PC-3 (cell line): ENCODE measurements at regions of chr11 and their contacts with region 1.

Region 1: DNA sequence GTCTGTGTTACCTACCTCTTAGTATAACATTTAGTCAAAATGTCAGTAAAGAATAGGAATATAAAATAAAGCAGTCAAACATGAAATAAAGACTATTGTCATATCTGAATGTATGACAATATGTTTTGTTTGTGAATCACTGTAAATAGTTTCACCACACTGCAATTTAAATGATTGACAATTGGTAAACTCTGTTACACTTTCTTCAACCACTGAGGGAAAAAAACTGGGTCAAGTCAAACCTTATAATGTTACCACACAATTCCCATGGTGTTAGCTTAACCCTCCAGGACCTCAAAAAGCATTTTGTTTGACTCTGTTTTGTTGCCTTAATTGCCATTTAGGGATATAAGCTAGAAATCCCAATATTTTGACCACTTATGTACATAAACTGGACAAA is 10.5 kb upstream of the MMP13 start:
- DNase-seq: peak; percentile 77
- ATAC-seq: peak; percentile 82
- H3K4me3 ChIP-seq: no peak overlapping the region
- H3K27ac ChIP-seq: no peak overlapping the region
- H3K4me1 ChIP-seq: peaks cover 19% of the 10 kb centered on the region
- H3K27me3 ChIP-seq: no peaks in the 10 kb centered on the region
- CTCF ChIP-seq: no peak

Region 2: DNA sequence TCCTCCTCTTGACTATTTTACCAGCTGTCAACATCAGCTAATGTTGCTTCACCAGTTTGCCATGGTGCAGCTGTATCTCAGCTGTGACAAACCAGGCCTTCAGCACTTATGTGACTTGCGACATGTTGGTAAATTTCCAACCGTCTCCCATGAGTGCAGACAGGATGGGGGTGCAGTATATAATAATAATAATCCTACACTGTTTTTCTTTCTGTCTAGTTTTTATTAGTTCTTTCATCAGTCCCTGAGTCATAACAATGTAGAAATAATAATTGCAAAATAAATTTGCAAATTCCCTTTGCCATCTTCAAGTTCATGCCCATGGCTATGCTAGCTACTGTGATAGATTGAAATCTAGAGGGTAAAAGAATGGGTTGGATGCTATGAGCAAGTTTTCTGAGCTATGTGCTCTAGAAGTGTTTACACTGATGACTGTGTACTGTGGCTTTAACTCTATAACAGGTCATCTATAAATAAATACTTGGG is 15.3 kb before region 1 on chr11:
- CTCF ChIA-PET with region 1: interaction called, 3 read pairs
- POLR2A ChIA-PET with region 1: interaction called, 23 read pairs
- intact Hi-C with region 1: no loop called
- DNase-seq: peak; percentile 92
- ATAC-seq: peak; percentile 86
- H3K4me3 ChIP-seq: no peak overlapping the region
- H3K27ac ChIP-seq: 0 out of 2 replicates have a peak overlapping the region, but pooled peaks have one; percentile 0
- H3K4me1 ChIP-seq: peaks cover 33% of the 10 kb centered on the region
- H3K27me3 ChIP-seq: no peaks in the 10 kb centered on the region
- CTCF ChIP-seq: no peak